ENCODE measurements at regions of chr13 and their contacts with region 1.

Region 1: GRCh38 chr13:75372517-75372916 is 109.5 kb downstream of the TBC1D4 start:
- DNase-seq: no peak
- ATAC-seq: peak; percentile 83
- H3K4me3 Mint-ChIP-seq: no peak overlapping the region
- H3K27ac Mint-ChIP-seq: no peak overlapping the region
- H3K4me1 Mint-ChIP-seq: peaks cover 43% of the 10 kb centered on the region
- H3K27me3 Mint-ChIP-seq: no peaks in the 10 kb centered on the region
- CTCF ChIP-seq: peak; percentile 63; the same call in 1 of the 2 replicates

Region 2: GRCh38 chr13:75357576-75358289 is 14.8 kb before region 1 on chr13:
- CTCF ChIA-PET with region 1: interaction called, 19 read pairs
- POLR2A ChIA-PET with region 1: interaction called, 3 read pairs
- DNase-seq: peak; percentile 57
- ATAC-seq: peak; percentile 93
- H3K4me3 Mint-ChIP-seq: no peak overlapping the region
- H3K27ac Mint-ChIP-seq: peak overlapping the region; percentile 67; the same call in 1 of the 2 replicates
- H3K4me1 Mint-ChIP-seq: peaks cover 17% of the 10 kb centered on the region
- H3K27me3 Mint-ChIP-seq: no peaks in the 10 kb centered on the region
- CTCF ChIP-seq: peak; percentile 56

Measured in WTC11 (cell line).